ENCODE measurements at regions of chr1 and their contacts with region 1.

Region 1: DNA sequence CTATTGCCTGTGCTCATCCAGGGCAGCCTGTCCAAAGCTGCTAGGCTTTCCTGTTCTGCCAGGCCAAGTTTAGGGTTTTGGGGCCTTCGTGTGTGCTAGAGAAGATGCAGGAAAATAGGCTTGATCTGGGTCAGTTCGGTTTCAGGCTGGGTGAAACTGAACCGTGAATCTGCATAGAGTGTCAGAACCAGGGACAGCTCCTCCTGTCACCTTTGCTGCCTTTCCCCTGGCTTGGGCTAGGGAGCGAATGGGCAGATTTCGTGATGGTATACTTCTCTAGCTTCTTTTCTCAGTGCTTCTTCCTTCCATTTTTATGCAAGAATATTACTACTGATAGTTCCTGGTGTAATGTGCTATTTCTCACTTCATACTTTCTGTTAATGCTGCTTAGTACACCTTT is 6.0 kb upstream of the AGO1 start:
- DNase-seq: no peak

Region 2: GRCh38 chr1:35747938-35748702 is 128.9 kb before region 1 on chr1:
- intact Hi-C with region 1: no loop called
- DNase-seq: no peak

Region 3: DNA sequence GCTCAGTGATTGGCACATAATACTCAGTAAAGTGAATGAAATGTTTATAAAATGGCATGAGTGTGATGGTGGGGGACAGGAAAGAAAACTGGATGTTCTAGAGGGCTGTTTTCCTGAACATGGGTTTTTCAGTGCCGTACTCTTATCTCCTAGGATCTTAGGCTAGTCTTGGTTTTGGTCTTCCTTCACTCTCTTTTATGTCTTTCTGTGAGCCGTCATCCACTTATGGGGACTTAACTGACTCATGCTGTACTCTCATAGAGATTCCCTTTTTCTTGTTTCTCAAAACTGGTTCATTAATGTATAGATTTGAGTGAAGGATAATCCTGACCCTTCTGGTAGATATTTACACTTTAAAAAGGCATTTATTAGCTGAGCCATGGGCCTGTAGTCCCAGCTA is 70.6 kb after region 1 on chr1:
- intact Hi-C with region 1: loop called in 1 of 2 experiments (anchors 2 kb)
- DNase-seq: no peak